ENCODE measurements at regions of chr16 and their contacts with region 1.

Region 1: GRCh38 chr16:23729503-23730424 is 16.7 kb upstream of the ERN2 start:
- DNase-seq: peak; percentile 51
- ATAC-seq: peak; percentile 84
- H3K4me3 ChIP-seq: 0 out of 6 replicates have a peak overlapping the region, but pooled peaks of 1 of the 3 experiments have one; percentile 3
- H3K27ac ChIP-seq: no peak overlapping the region
- H3K4me1 ChIP-seq: peaks cover 33% of the 10 kb centered on the region
- H3K27me3 ChIP-seq: no peaks in the 10 kb centered on the region
- CTCF ChIP-seq: no peak
- EP300 ChIP-seq: no peak
- POLR2A ChIP-seq: peak in 1 of 2 experiments; percentile 34; a peak in 1 of 4 replicates
- RAD21 ChIP-seq: no peak

Region 2: DNA sequence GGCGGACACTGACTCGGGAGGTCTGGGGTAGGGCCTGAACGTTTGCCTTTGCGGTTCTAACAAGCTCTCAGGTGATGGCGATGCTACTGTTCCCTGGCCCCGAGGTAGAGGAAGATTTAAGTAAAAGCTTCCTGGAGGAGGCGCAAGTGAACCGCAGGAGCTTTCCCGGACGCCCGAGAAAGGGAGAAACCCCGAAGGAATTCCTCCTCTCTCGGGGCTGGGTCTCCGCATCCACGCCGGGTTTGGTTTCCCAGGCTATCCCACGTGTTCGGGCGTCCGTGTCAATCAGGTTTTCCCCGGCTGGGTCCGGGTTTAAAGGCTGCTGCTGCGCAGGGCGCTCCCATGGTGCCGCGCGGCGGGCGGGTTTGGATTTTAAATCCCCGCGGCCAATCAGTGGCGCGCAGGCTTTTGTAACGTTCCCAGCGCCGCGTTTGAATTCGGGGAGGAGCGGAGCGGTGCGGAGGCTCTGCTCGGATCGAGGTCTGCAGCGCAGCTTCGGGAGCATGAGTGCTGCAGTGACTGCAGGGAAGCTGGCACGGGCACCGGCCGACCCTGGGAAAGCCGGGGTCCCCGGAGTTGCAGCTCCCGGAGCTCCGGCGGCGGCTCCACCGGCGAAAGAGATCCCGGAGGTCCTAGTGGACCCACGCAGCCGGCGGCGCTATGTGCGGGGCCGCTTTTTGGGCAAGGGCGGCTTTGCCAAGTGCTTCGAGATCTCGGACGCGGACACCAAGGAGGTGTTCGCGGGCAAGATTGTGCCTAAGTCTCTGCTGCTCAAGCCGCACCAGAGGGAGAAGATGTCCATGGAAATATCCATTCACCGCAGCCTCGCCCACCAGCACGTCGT is 51.1 kb before region 1 on chr16 and contains the start of gene PLK1:
- CTCF ChIA-PET with region 1: interaction called, 3 read pairs
- POLR2A ChIA-PET with region 1: interaction called, 3 read pairs
- in situ Hi-C with region 1: no loop called
- intact Hi-C with region 1: loop called (anchors 2 kb)
- DNase-seq: peak; percentile 90
- ATAC-seq: peak; percentile 89
- H3K4me3 ChIP-seq: peak within 1 kb of the TSS; percentile 94 to 97 (median 95)
- H3K27ac ChIP-seq: peak within 1 kb of the TSS; percentile 75
- H3K4me1 ChIP-seq: peaks cover 67% of the 10 kb centered on the region
- H3K27me3 ChIP-seq: no peaks in the 10 kb centered on the region; a peak in 1 of 5 replicates
- CTCF ChIP-seq: peak; percentile 57
- EP300 ChIP-seq: peak; percentile 23 to 49; a peak in 1 of 4 replicates
- POLR2A ChIP-seq: peak; percentile 91 to 93
- RAD21 ChIP-seq: no peak; the same call in none of the 2 replicates
- total RNA-seq, gene PLK1: 76.3 and 97.4 TPM in 2 replicates

Region 3: DNA sequence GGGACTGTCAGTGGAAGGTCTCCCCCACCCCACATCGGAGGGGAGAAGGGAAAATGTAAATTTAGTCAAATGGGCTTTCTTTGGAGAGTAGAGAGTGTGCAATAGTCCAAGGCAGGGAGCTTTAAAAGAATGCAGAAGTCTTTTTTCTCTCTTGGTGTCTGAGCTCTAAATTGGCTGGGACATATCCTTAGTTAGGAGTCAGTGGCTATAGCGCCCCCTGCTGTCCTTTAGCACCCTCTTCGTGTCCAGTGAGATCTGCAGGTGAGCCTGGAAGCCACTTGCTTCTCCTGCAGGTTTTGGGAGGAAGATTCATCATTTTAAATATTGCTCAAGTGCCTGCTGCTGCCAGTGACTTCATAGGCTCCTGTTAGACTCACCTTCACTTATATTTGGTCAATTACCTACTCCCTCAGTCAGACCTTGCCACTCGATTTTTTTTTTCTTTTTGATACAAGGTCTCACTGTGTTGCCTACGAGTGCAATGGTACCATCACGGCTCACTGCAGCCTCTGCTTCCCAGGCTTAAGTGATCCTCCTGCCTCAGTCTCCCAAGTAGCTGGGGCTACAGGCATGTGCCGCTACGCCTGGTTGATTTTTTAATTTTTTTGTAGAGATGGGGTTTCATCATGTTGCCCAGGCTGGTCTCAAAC is 280.8 kb after region 1 on chr16:
- CTCF ChIA-PET with region 1: interaction called, 15 read pairs
- POLR2A ChIA-PET with region 1: no interaction called
- in situ Hi-C with region 1: no loop called
- intact Hi-C with region 1: loop called (anchors 2 kb)
- DNase-seq: peak; percentile 79
- ATAC-seq: peak; percentile 94
- H3K4me3 ChIP-seq: no peak overlapping the region
- H3K27ac ChIP-seq: no peak overlapping the region
- H3K4me1 ChIP-seq: peaks cover 5% of the 10 kb centered on the region; the same call in 1 of the 2 replicates
- H3K27me3 ChIP-seq: no peaks in the 10 kb centered on the region; a peak in 2 of 5 replicates
- CTCF ChIP-seq: peak; percentile 81
- EP300 ChIP-seq: no peak
- POLR2A ChIP-seq: no peak
- RAD21 ChIP-seq: peak; percentile 47; the same call in 1 of the 2 replicates

Region 4: GRCh38 chr16:24036614-24037013 is 306.9 kb after region 1 on chr16:
- CTCF ChIA-PET with region 1: interaction called, 12 read pairs
- POLR2A ChIA-PET with region 1: no interaction called
- in situ Hi-C with region 1: no loop called
- intact Hi-C with region 1: no loop called
- DNase-seq: peak; percentile 46
- ATAC-seq: peak; percentile 81
- H3K4me3 ChIP-seq: no peak overlapping the region
- H3K27ac ChIP-seq: no peak overlapping the region
- H3K4me1 ChIP-seq: no peaks in the 10 kb centered on the region
- H3K27me3 ChIP-seq: no peaks in the 10 kb centered on the region; a peak in 1 of 5 replicates
- CTCF ChIP-seq: peak; percentile 92
- EP300 ChIP-seq: no peak
- POLR2A ChIP-seq: no peak
- RAD21 ChIP-seq: peak; percentile 88